ENCODE measurements at regions of chr12 and their contacts with region 1.

Region 1: DNA sequence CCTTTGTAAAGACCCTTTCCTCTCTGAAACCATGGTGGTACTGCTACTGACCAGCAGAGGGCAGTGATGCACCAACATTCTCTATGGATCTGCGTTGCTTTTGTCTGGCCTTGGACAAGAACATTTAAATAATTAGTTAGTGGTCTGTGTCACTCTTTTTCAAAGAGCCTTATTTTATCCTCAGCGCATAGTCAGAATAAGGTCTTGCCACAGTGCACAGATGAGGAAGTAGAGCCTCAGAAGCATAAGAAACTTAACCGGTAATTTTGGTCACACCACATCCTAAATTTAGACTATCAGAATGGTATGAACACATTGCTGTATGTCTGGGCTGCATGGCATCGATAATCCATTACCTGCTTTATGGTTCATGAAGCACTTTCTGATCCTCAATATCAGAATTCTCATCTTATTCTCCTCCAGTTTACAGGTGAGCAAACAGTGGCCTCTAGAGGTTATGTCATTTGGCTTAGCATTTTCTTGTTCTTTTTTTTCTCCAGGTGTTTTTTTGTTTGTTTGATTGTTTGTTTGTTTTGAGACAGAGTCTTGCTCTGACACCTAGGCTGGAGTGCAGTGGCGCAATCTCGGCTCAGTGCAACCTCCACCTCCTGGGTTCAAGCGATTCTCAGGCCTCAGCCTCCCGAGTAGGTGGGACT is 23.7 kb upstream of the IFT81 start:
- DNase-seq: peak; percentile 71 to 93
- H3K4me3 ChIP-seq: no peak overlapping the region
- CTCF ChIP-seq: peak in 1 of 3 donors; percentile 90
- POLR2A ChIP-seq: no peak

Region 2: DNA sequence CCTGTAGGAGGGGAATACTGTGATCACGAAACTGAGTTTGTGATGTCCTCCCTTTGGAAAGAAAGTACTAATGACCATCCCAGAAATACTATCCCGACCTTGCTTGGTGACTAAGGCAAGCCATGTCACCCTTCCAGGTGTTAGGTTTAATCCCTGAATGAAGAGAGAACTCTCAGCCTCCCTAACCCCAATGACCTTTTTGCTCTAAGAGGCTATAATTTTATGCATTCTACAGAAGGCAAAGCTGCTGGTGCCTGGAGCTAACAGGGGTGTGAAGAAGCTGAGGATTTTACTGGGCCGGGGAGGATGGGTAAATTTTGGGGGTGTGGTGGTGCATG is 44.3 kb before region 1 on chr12:
- intact Hi-C with region 1: no loop called
- DNase-seq: no peak
- H3K4me3 ChIP-seq: no peak overlapping the region
- CTCF ChIP-seq: no peak
- POLR2A ChIP-seq: no peak

Region 3: GRCh38 chr12:110403146-110403975 is 302.9 kb after region 1 on chr12 and contains the start of gene ANAPC7:
- intact Hi-C with region 1: no loop called
- DNase-seq: peak; percentile 88 to 97
- H3K4me3 ChIP-seq: peak within 1 kb of the TSS; percentile 70
- CTCF ChIP-seq: no peak
- POLR2A ChIP-seq: no peak
- total RNA-seq, gene ANAPC7: 28.4 to 42.0 (median 37.3) TPM

Region 4: GRCh38 chr12:110426406-110426805 is 326.0 kb after region 1 on chr12:
- intact Hi-C with region 1: loop called (anchors 10 kb)
- DNase-seq: no peak
- H3K4me3 ChIP-seq: no peak overlapping the region
- CTCF ChIP-seq: no peak
- POLR2A ChIP-seq: no peak

Region 5: GRCh38 chr12:110606253-110606611 is 505.8 kb after region 1 on chr12:
- intact Hi-C with region 1: no loop called
- DNase-seq: no peak
- H3K4me3 ChIP-seq: no peak overlapping the region
- CTCF ChIP-seq: no peak
- POLR2A ChIP-seq: no peak